Naive thymus-derived CD4-positive, alpha-beta T cell (primary cell): ENCODE measurements at regions of chr6 and their contacts with region 1.

Region 1: GRCh38 chr6:154218301-154218700 is 138.3 kb downstream of the IPCEF1 start:
- DNase-seq: peak in 3 of 9 donors; percentile 17 to 34 (median 33)
- ATAC-seq: peak; percentile 54
- H3K4me3 ChIP-seq: no peak overlapping the region
- H3K4me3 Mint-ChIP-seq: peak overlapping the region in 9 of 10 donors; percentile 39 to 86 (median 78)
- H3K27ac ChIP-seq: peak overlapping the region; percentile 38
- H3K27ac Mint-ChIP-seq: peak overlapping the region in 8 of 9 donors; percentile 66 to 96 (median 88)
- H3K4me1 ChIP-seq: peaks cover 0 to 45% of the 10 kb centered on the region in 2 donors
- H3K4me1 Mint-ChIP-seq: peaks cover 22 to 79% (median 72%) of the 10 kb centered on the region in 7 donors
- H3K27me3 ChIP-seq: no peaks in the 10 kb centered on the region
- H3K27me3 Mint-ChIP-seq: no peaks in the 10 kb centered on the region

Region 2: GRCh38 chr6:154164397-154165165 is 53.7 kb before region 1 on chr6:
- CTCF ChIA-PET with region 1: no interaction called
- POLR2A ChIA-PET with region 1: interaction called, 6 read pairs
- intact Hi-C with region 1: loop called in 1 of 2 experiments (anchors 2 kb)
- DNase-seq: peak in 6 of 9 donors; percentile 33 to 54 (median 44)
- ATAC-seq: no peak
- H3K4me3 ChIP-seq: no peak overlapping the region
- H3K4me3 Mint-ChIP-seq: peak overlapping the region in 9 of 10 donors; percentile 48 to 77 (median 72)
- H3K27ac ChIP-seq: peak overlapping the region; percentile 35
- H3K27ac Mint-ChIP-seq: peak overlapping the region in 6 of 9 donors; percentile 33 to 93 (median 87)
- H3K4me1 ChIP-seq: peaks cover 0 to 38% of the 10 kb centered on the region in 2 donors
- H3K4me1 Mint-ChIP-seq: peaks cover 11 to 59% (median 33%) of the 10 kb centered on the region in 7 donors
- H3K27me3 ChIP-seq: no peaks in the 10 kb centered on the region
- H3K27me3 Mint-ChIP-seq: peaks cover 0 to 2% (median 0%) of the 10 kb centered on the region in 5 donors

Region 3: GRCh38 chr6:154202339-154202738 is 16.0 kb before region 1 on chr6:
- CTCF ChIA-PET with region 1: no interaction called
- POLR2A ChIA-PET with region 1: no interaction called
- intact Hi-C with region 1: loop called in 1 of 2 experiments (anchors 2 kb)
- DNase-seq: no peak
- ATAC-seq: no peak
- H3K4me3 ChIP-seq: no peak overlapping the region
- H3K4me3 Mint-ChIP-seq: no peak overlapping the region
- H3K27ac ChIP-seq: no peak overlapping the region
- H3K27ac Mint-ChIP-seq: peak overlapping the region in 6 of 9 donors; percentile 10 to 69 (median 37)
- H3K4me1 ChIP-seq: peaks cover 0 to 7% of the 10 kb centered on the region in 2 donors
- H3K4me1 Mint-ChIP-seq: peaks cover 12 to 91% (median 83%) of the 10 kb centered on the region in 7 donors
- H3K27me3 ChIP-seq: no peaks in the 10 kb centered on the region
- H3K27me3 Mint-ChIP-seq: no peaks in the 10 kb centered on the region

Region 4: GRCh38 chr6:154229786-154230185 is 11.5 kb after region 1 on chr6:
- CTCF ChIA-PET with region 1: interaction called, 3 read pairs
- POLR2A ChIA-PET with region 1: interaction called, 5 read pairs
- intact Hi-C with region 1: loop called in 1 of 2 experiments (anchors 1 kb)
- DNase-seq: peak in 2 of 9 donors; percentile 41 to 56
- ATAC-seq: peak; percentile 64
- H3K4me3 ChIP-seq: peak overlapping the region; percentile 30
- H3K4me3 Mint-ChIP-seq: peak overlapping the region; percentile 75 to 89 (median 78)
- H3K27ac ChIP-seq: peak overlapping the region; percentile 41
- H3K27ac Mint-ChIP-seq: peak overlapping the region; percentile 66 to 94 (median 86)
- H3K4me1 ChIP-seq: peaks cover 32 to 63% of the 10 kb centered on the region in 2 donors
- H3K4me1 Mint-ChIP-seq: peaks cover 55 to 91% (median 87%) of the 10 kb centered on the region in 7 donors
- H3K27me3 ChIP-seq: no peaks in the 10 kb centered on the region
- H3K27me3 Mint-ChIP-seq: no peaks in the 10 kb centered on the region